Mammary epithelial cell (primary cell): ENCODE measurements at regions of chr6 and their contacts with region 1.

Region 1: GRCh38 chr6:125906158-125906998 is 50.2 kb upstream of the HINT3 start:
- DNase-seq: no peak
- H3K4me3 ChIP-seq: no peak overlapping the region
- H3K27ac ChIP-seq: no peak overlapping the region
- H3K4me1 ChIP-seq: peaks cover 14% of the 10 kb centered on the region
- H3K27me3 ChIP-seq: no peaks in the 10 kb centered on the region
- CTCF ChIP-seq: peak; percentile 72 to 86

Region 2: GRCh38 chr6:125853740-125854139 is 52.6 kb before region 1 on chr6:
- CTCF ChIA-PET with region 1: no interaction called
- dilution Hi-C with region 1: no loop called
- in situ Hi-C with region 1: no loop called
- intact Hi-C with region 1: no loop called
- DNase-seq: no peak
- H3K4me3 ChIP-seq: no peak overlapping the region
- H3K27ac ChIP-seq: no peak overlapping the region
- H3K4me1 ChIP-seq: no peaks in the 10 kb centered on the region
- H3K27me3 ChIP-seq: no peaks in the 10 kb centered on the region
- CTCF ChIP-seq: no peak

Region 3: GRCh38 chr6:125867483-125867935 is 38.9 kb before region 1 on chr6:
- CTCF ChIA-PET with region 1: interaction called, 17 read pairs
- dilution Hi-C with region 1: no loop called
- in situ Hi-C with region 1: no loop called
- intact Hi-C with region 1: loop called (anchors 1 kb)
- DNase-seq: peak; percentile 99
- H3K4me3 ChIP-seq: peak overlapping the region in 1 of 3 experiments; percentile 21
- H3K27ac ChIP-seq: peak overlapping the region; percentile 90
- H3K4me1 ChIP-seq: peaks cover 26% of the 10 kb centered on the region
- H3K27me3 ChIP-seq: no peaks in the 10 kb centered on the region
- CTCF ChIP-seq: no peak

Region 4: GRCh38 chr6:125947586-125947985 is 41.2 kb after region 1 on chr6:
- CTCF ChIA-PET with region 1: no interaction called
- dilution Hi-C with region 1: no loop called
- in situ Hi-C with region 1: loop called in 1 of 2 experiments (anchors 5 kb)
- intact Hi-C with region 1: no loop called
- DNase-seq: peak; percentile 67
- H3K4me3 ChIP-seq: no peak overlapping the region
- H3K27ac ChIP-seq: peak overlapping the region; percentile 9
- H3K4me1 ChIP-seq: peaks cover 60% of the 10 kb centered on the region
- H3K27me3 ChIP-seq: no peaks in the 10 kb centered on the region
- CTCF ChIP-seq: no peak

Region 5: DNA sequence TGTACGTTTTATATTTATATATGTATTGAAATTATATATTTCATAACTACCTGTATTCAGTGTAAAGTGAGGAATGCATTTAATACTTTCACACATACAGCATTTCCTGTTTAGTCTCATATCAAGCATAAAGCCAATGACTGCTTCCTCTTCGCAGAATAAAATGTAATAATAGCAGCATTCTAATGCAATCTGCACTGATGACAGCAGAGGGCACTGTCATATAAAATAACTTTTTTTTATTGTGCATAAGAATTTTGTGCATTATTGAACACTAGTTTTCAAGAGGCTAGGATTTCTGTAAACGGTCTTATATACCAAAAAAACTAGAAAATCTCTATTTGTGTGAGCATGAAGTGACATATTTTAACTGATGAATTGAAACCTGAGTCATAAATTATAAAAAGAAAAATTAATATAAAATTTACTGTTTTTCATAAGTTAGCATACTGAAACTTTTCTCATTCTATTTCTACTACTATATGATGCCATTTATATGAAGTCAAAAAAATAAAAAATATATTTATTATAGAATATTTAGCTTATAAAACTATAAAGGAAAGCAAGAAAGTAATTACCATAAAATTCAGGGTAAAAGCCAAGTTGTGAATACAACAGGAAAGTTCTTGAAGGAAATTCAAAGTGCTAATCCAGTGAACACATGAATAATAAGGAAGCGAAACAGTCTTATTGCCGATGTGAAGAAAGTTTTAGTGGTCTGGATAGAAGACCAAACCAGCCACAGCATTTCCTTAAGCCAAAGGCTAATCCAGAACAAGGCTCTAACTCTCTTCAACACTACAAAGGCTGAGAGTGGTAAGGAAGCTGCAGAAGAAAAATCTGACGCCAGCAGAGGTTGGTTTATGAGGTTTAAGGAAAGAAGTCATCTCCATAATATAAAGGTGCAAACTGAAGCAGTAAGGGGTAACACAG is 1396.6 kb after region 1 on chr6:
- CTCF ChIA-PET with region 1: no interaction called
- dilution Hi-C with region 1: no loop called
- in situ Hi-C with region 1: no loop called
- intact Hi-C with region 1: no loop called
- DNase-seq: peak; percentile 33
- H3K4me3 ChIP-seq: no peak overlapping the region
- H3K27ac ChIP-seq: no peak overlapping the region
- H3K4me1 ChIP-seq: peaks cover 7% of the 10 kb centered on the region
- H3K27me3 ChIP-seq: no peaks in the 10 kb centered on the region
- CTCF ChIP-seq: peak; percentile 68 to 87